ENCODE measurements at regions of chr17 and their contacts with region 1.

Region 1: DNA sequence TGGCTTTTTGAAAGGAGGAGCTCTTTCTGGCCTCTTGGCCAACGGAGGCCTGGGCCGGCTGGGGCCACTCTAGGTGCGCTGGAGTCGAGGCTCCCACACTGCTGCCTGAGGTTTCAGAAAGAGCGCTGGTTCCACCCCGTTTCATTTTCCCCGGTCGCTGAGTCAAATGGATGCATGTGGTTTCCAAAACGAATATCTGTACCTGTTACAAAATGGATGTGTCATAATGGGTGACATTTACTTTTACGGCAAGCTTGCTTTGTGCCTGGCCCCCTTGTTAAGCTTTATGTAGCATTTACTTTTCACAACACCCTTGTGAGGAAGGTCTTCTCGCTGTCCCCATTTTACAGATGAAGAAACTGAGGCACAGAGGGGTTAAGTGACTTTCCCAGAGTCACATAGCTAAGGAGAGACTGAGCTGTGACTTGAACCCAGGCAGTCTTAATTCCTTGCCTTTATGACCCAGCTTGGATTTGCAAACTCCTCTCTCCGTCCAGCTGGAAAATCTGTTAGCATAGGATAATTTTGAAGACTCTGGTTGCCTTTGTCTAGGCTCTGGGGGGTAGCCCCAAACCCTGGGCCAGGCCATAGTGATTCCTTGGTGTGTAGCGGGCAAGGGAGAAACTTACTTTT is 10.6 kb downstream of the KSR1 start:
- DNase-seq: no peak
- H3K4me3 ChIP-seq: no peak overlapping the region
- H3K27ac ChIP-seq: peak overlapping the region in 1 of 4 donors; percentile 14
- H3K4me1 ChIP-seq: peaks cover 0 to 4% (median under 1%) of the 10 kb centered on the region in 4 donors
- H3K27me3 ChIP-seq: no peaks in the 10 kb centered on the region
- CTCF ChIP-seq: no peak
- EP300 ChIP-seq: no peak
- POLR2A ChIP-seq: no peak

Region 2: DNA sequence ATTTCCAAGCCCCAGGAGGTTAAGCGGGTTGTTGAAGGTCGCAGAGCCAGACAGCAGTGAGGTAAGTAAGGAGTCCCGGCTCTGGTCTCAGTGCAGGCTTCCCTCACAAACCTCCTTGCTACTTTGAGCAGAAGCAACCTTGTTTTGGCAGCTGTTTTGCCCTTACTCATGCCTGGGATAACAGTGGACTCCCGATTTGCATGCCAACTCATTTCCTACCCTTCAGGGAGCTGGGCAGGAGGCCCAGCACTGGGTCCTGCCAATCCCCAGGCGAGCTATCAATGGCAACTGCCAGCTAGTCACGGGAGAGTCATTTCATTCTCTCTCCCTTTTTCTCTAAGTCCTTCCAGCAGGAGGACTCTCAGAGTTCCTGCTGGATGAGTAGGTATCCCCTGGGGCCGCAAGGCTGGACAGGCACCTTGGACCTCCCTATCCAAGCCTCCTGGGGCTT is 82.6 kb before region 1 on chr17:
- intact Hi-C with region 1: no loop called
- DNase-seq: peak; percentile 89
- H3K4me3 ChIP-seq: no peak overlapping the region
- H3K27ac ChIP-seq: peak overlapping the region in 3 of 4 donors; percentile 50 to 68 (median 63)
- H3K4me1 ChIP-seq: peaks cover 0 to 47% (median 36%) of the 10 kb centered on the region in 4 donors
- H3K27me3 ChIP-seq: no peaks in the 10 kb centered on the region
- CTCF ChIP-seq: no peak
- EP300 ChIP-seq: peak in 1 of 4 donors; percentile 37
- POLR2A ChIP-seq: no peak

Region 3: GRCh38 chr17:27519550-27519949 is 52.7 kb after region 1 on chr17:
- intact Hi-C with region 1: loop called (anchors 10 kb)
- DNase-seq: no peak
- H3K4me3 ChIP-seq: no peak overlapping the region
- H3K27ac ChIP-seq: no peak overlapping the region
- H3K4me1 ChIP-seq: peaks cover 0 to 37% (median 19%) of the 10 kb centered on the region in 4 donors
- H3K27me3 ChIP-seq: no peaks in the 10 kb centered on the region
- CTCF ChIP-seq: no peak
- EP300 ChIP-seq: no peak
- POLR2A ChIP-seq: no peak